Right ventricle myocardium inferior (tissue), 1 donor: ENCODE measurements at regions of chr21 and their contacts with region 1.

Region 1: DNA sequence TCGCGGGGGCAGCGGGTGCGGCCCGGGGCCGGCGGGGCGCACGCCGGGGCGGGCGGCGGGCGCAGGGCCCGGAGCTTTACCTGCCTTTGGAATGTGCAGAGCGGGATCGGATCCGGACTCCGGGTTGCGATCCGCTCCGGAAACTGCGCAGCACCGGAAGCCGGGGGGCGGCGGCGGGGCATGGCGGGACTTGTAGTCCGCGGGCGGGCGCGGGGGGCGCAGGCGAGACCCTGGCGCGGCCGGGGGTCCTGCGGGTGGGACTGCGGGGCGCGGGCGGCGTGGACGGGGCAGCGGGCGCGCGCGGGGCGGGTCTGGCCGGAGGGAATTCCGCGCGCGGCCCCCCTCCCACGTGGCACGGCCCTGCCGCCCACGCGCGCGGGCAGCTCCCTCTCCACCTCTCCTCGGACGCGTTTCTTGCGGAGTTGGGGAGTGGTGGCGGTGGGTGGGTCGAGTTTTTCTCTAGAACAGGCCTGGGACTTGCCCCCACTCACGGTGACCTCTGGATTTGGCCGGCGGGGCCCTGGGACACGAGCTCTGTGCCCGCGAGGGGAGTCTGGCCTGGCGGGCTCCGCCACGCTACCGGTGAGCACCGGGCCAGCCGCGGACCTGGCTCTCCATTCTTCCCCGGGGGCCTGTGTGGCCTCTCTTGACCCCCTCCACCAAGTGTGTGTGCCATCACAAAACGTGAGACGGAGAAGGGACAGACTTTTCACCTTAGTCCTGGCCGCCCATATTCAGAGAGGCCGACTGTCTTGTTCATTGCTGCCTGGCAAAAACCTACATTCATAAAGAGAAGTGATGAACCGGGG is at the start of gene PRDM15:
- DNase-seq: peak; percentile 79
- ATAC-seq: peak; percentile 57
- total RNA-seq, gene PRDM15: 4.6 TPM

Region 2: GRCh38 chr21:41612674-41613532 is 266.5 kb before region 1 on chr21:
- intact Hi-C with region 1: loop called (anchors 10 kb)
- DNase-seq: peak; percentile 85
- ATAC-seq: peak; percentile 96

Region 3: DNA sequence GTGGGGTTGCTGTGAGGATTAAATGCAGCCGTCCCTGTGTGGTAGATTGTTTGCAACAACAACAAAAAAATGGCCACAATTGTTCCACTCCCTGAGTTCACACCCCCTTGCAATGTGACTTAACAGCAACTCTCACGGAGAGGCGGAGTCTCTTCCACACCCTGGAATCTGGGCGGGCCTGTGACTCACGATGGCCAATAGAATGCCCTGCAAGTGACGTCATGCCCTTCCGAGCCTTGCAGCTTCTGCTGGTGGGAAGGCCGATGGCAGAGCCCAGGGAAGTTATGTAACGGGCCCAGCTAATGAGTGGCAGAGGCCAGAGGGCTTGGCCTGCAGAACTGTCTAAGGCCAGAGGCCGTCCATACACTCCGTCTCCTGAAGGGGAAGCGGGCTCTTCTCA is 200.4 kb before region 1 on chr21:
- intact Hi-C with region 1: no loop called
- DNase-seq: peak; percentile 91
- ATAC-seq: peak; percentile 96

Region 4: DNA sequence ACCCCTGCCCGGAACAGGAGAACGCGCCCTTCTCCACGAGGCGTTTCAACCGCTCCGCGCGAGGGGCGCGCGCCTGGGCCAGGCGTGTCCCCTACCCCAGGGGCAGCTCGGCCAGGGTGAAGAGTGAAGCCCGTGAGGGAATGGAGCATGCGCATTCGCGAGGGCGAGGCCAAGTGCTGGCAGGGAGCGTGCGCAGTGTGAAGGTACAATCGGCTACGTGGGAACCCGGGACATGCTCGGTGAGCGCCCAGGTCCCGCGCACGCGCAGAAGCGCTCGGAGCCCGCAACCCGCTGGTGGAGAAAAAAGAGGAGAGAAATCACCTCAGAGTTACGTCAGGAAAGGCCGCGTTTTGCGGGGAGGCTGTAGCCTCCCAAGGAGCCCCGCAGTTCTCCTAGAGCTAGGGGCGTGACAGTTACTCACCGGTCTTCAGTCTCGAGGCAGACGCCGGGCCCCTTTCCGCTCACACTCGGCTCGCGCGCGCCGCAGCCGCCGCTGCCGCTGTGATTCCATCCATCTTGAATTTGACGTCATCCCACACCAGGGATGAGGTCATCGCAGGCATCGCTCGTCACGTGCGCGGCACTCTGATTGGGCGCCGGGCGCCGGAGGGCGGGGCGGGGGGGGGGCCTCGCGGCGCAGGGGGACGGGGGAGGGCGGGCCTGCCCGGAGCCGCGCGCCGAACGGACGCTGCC is 130.6 kb after region 1 on chr21 and contains the start of gene ZBTB21:
- intact Hi-C with region 1: loop called (anchors 2 kb)
- DNase-seq: peak; percentile 99
- ATAC-seq: peak; percentile 98
- total RNA-seq, gene ZBTB21: 6.1 TPM

Region 5: DNA sequence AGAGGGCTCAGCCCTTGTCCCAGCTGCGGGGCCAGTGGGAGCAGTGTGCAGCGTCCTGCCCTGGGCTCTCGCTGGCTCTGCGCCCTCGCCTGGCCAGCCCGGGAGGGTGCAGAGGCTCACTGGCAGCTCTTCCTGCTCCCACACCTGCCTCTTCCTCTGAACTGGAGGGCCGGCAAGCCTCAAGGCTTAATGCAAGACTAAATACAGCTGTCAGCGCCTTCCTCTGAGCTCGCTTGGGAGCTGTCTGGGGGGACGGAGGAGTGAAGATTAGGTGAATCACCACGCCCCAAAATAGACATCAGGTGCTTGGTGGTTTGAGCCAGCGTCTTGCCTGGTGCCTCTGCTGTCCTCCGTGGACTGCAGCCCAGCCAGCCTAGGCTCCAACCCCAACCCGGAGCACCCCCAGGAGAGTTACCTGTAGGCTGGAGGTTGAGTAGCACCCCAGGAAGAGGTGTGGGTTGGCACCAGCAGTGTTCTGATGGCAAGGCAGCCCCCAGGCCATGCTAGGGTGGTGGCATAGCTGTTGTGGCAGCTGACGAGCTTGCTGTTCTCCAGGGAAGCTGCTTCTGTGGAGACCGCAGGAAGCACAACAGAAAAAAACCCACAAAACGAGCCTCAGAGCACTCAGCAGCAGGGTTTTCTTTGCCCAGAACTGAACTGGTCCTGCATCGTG is 228.6 kb after region 1 on chr21:
- intact Hi-C with region 1: loop called (anchors 5 kb)
- DNase-seq: peak; percentile 78
- ATAC-seq: peak; percentile 86